Activated CD4-positive, alpha-beta T cell treated with anti-CD3 and anti-CD28 coated beads, Interleukin-2, amount 10 ng/mL, durations not matched to agents 24 days and 14 days (primary cell): ENCODE measurements at regions of chr15 and their contacts with region 1.

Region 1: DNA sequence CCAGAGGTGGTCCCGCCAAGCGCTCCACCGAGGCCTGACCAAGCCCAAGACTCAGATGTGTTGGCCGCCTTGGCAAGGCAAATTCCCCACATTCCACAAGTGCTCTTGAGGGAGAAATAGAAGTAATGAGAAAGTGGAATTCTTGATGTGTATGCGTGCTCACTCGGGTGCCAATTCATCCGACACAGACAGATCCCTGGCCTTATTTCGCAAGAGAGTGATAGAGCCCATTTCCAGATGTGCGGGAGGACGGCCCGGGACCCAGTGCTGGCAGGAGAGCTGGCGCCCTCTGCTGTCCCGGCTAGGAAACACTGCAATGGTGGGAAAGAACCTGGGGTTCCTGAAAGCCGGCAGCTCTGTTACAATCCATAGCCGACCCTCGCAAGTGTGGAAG is 76.0 kb downstream of the HMG20A start:
- DNase-seq: peak; percentile 92
- H3K4me3 Mint-ChIP-seq: no peak overlapping the region
- H3K27ac Mint-ChIP-seq: no peak overlapping the region
- H3K4me1 Mint-ChIP-seq: peaks cover 20% of the 10 kb centered on the region
- H3K27me3 Mint-ChIP-seq: no peaks in the 10 kb centered on the region

Region 2: DNA sequence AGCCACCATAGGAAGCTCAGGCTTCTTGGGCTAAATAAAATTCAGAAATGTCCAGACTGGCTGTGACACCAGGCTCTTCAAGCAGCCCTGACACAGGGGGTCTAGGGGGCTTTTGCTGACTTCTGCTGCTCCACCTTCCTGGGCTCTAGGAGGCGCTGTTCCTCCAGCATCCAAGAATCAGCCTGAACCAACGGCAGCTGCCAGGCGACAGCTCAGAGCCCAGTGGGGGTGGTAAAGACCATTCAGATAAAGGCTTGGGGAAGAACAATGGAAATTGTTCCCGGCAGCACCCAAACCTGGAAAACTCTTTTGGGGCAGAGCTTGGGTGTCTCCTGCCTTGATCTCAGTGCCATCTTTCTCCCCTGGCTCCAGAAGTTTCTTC is 523.4 kb before region 1 on chr15:
- intact Hi-C with region 1: loop called (anchors 10 kb)
- DNase-seq: peak; percentile 88
- H3K4me3 Mint-ChIP-seq: no peak overlapping the region
- H3K27ac Mint-ChIP-seq: peak overlapping the region; percentile 32
- H3K4me1 Mint-ChIP-seq: peaks cover 24% of the 10 kb centered on the region
- H3K27me3 Mint-ChIP-seq: peaks cover 8% of the 10 kb centered on the region

Region 3: DNA sequence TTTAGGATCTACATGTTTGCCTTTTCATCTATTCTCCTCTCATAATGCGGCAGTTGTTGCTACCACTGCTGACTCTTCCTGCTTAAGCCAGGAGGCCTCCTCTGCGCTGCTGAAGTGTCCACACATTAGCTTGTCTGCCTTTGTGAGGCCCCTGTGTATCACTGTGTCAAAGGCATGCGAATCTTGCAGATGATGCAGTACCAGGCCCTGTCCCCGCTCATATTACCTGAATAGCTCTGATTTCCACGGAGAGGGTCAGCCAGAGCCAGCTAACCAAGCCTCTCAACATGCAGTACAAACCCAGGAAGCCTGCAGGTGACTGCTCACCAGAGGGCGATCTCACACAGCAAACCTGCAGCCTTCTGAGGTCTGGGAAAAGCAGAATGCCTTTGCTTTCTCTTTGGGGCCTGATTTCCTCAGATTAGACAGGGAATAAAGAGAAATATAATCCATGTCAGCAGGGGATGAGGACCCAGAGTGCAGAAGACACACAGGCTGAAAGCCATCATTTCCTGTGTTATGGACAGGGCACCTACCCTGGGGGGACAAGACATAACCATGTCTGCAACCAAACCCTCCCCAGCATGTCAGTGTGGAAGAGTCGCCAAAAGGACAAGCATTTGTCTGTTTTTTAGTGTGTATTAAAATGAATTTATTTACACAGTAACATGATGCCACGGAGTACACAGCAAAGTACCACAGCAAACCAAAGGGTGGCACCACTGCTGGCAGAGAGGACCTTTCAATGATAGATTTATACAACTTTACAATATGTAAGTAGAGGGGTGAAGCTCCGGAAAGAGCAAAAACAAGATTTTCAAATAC is 389.0 kb before region 1 on chr15:
- intact Hi-C with region 1: loop called (anchors 1 kb)
- DNase-seq: peak; percentile 84
- H3K4me3 Mint-ChIP-seq: no peak overlapping the region
- H3K27ac Mint-ChIP-seq: no peak overlapping the region
- H3K4me1 Mint-ChIP-seq: peaks cover 2% of the 10 kb centered on the region
- H3K27me3 Mint-ChIP-seq: no peaks in the 10 kb centered on the region

Region 4: DNA sequence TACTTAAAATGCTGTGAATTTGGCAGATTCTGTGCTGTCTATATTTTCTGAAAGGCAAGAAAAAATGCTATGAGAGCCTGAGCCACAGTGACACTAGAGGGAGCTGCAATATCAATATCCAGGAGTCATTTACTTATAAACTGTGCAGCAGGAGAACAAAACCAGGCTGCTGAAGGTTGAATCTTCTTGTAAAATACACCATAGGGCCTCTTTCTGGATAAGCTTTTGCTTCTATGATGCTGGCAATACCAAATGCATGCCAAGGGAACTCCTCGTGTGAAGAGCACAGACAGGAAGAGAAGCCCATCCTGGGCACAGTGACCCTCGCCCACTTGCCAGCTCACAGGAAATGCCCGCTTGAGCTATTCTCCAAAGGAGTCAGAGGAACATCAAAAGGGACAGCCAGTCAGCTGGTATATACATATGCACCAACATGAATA is 377.8 kb before region 1 on chr15:
- intact Hi-C with region 1: loop called (anchors 1 kb)
- DNase-seq: peak; percentile 82
- H3K4me3 Mint-ChIP-seq: no peak overlapping the region
- H3K27ac Mint-ChIP-seq: no peak overlapping the region
- H3K4me1 Mint-ChIP-seq: peaks cover 14% of the 10 kb centered on the region
- H3K27me3 Mint-ChIP-seq: peaks cover 2% of the 10 kb centered on the region

Region 5: DNA sequence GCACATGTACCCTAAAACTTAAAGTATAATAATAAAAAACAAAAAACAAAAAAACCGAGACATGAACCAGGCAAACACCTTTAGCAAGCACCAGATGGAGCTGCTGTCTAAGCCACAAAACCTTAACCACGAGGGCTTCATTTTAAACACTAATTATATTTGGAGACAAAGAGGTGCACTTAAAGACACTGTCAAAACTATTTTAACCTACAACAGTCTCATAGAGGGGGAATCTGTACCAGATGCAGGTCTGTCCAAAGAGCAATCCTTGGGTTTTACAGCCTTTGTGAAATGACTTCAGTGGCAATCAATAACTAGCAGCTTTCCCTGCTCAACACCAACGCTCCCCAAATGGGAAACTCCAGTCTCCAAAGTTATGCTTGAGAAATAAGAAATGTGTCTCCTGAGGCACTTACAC is 310.1 kb before region 1 on chr15:
- intact Hi-C with region 1: loop called (anchors 1 kb)
- DNase-seq: peak; percentile 73
- H3K4me3 Mint-ChIP-seq: no peak overlapping the region
- H3K27ac Mint-ChIP-seq: peak overlapping the region; percentile 48
- H3K4me1 Mint-ChIP-seq: peaks cover 64% of the 10 kb centered on the region
- H3K27me3 Mint-ChIP-seq: no peaks in the 10 kb centered on the region

Region 6: GRCh38 chr15:77329202-77329601 is 167.5 kb before region 1 on chr15:
- intact Hi-C with region 1: no loop called
- DNase-seq: no peak
- H3K4me3 Mint-ChIP-seq: no peak overlapping the region
- H3K27ac Mint-ChIP-seq: no peak overlapping the region
- H3K4me1 Mint-ChIP-seq: no peaks in the 10 kb centered on the region
- H3K27me3 Mint-ChIP-seq: no peaks in the 10 kb centered on the region

Region 7: GRCh38 chr15:77419836-77420609 is 76.7 kb before region 1 on chr15 and contains the start of gene PEAK1:
- intact Hi-C with region 1: loop called (anchors 5 kb)
- DNase-seq: peak; percentile 100
- H3K4me3 Mint-ChIP-seq: peak within 1 kb of the TSS; percentile 96
- H3K27ac Mint-ChIP-seq: peak within 1 kb of the TSS; percentile 94
- H3K4me1 Mint-ChIP-seq: peaks cover 29% of the 10 kb centered on the region
- H3K27me3 Mint-ChIP-seq: no peaks in the 10 kb centered on the region
- total RNA-seq, gene PEAK1: 25.9 and 28.2 TPM in 2 replicates

Region 8: GRCh38 chr15:77568973-77569728 is 72.4 kb after region 1 on chr15:
- intact Hi-C with region 1: no loop called
- DNase-seq: no peak
- H3K4me3 Mint-ChIP-seq: no peak overlapping the region
- H3K27ac Mint-ChIP-seq: no peak overlapping the region
- H3K4me1 Mint-ChIP-seq: peaks cover 3% of the 10 kb centered on the region
- H3K27me3 Mint-ChIP-seq: peaks cover 2% of the 10 kb centered on the region

Region 9: DNA sequence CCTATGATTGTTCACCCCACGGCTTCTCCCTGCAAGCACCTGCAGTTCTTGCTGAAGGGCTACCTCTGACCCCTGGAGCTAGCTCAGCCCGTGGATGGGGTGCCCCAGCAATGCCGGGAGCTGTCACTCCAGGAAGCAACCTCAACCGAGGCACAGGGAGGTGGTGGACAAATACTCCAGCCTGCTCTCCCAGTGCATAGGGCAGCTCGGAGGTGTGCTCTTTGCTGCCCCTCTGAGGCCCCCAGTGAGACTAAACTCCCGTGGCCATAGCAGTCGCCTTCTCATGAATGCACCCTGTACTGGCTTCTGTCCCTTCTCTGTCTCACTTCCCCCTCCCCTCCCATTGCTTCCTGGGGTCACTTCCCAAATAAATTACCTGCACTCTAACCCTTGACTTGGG is 87.5 kb after region 1 on chr15:
- intact Hi-C with region 1: no loop called
- DNase-seq: no peak
- H3K4me3 Mint-ChIP-seq: no peak overlapping the region
- H3K27ac Mint-ChIP-seq: no peak overlapping the region
- H3K4me1 Mint-ChIP-seq: no peaks in the 10 kb centered on the region
- H3K27me3 Mint-ChIP-seq: no peaks in the 10 kb centered on the region

Region 10: DNA sequence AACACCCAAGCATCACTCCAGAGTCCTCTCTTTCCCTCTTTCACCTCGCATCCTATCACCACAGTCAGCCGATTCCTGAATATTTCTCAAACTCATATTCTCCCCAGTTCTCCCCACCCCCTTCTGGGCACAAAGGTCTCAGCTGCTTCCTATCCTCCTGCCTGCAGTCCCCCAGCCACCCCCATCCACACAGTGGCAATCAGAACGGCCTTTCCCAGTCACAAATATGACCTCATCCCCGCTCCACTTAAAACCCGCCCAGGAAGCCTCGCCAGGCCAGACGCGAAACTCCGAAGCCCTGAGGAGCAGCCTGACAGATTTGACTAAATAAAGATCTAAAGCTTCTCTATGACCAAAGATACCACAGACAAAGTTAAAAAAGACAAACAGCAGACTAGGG is 185.9 kb after region 1 on chr15:
- intact Hi-C with region 1: no loop called
- DNase-seq: no peak
- H3K4me3 Mint-ChIP-seq: no peak overlapping the region
- H3K27ac Mint-ChIP-seq: no peak overlapping the region
- H3K4me1 Mint-ChIP-seq: no peaks in the 10 kb centered on the region
- H3K27me3 Mint-ChIP-seq: peaks cover 22% of the 10 kb centered on the region